Thyroid gland (tissue), 4 donors: ENCODE measurements at regions of chr12 and their contacts with region 1.

Region 1: DNA sequence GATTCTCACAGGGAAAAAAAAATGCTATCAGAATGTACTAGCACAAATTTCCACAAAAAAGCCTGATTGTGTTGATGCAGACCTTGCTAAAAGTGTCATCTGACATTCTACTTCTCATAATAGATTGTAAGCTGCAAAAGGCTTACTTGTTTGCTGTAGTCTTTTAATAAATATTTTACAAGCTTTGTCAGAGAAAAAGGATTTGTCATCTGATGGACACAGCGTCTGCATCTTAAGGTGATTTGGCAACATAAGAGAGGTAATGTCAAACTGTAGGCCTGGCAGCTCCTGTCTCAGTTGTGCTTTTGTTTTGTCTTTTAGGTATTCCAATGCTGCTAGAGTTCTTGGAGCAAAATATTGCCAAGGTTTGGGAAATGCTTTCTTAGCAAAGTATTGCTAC is 26.3 kb upstream of the KCNH3 start:
- DNase-seq: no peak
- H3K4me3 ChIP-seq: no peak overlapping the region
- H3K27ac ChIP-seq: no peak overlapping the region
- H3K4me1 ChIP-seq: peaks cover 0 to 15% of the 10 kb centered on the region in 2 donors
- H3K27me3 ChIP-seq: no peaks in the 10 kb centered on the region
- CTCF ChIP-seq: no peak
- POLR2A ChIP-seq: no peak

Region 2: GRCh38 chr12:49359671-49360070 is 152.9 kb before region 1 on chr12:
- intact Hi-C with region 1: loop called (anchors 2 kb)
- DNase-seq: no peak
- H3K4me3 ChIP-seq: no peak overlapping the region
- H3K27ac ChIP-seq: no peak overlapping the region
- H3K4me1 ChIP-seq: no peaks in the 10 kb centered on the region
- H3K27me3 ChIP-seq: no peaks in the 10 kb centered on the region
- CTCF ChIP-seq: no peak
- POLR2A ChIP-seq: no peak